ENCODE measurements at regions of chr2 and their contacts with region 1.

Region 1: GRCh38 chr2:207473049-207473930 is 56.5 kb upstream of the CREB1 start:
- DNase-seq: peak in 1 of 2 donors; percentile 45
- H3K4me3 ChIP-seq: peak overlapping the region; percentile 1 to 27
- H3K27ac ChIP-seq: peak overlapping the region in 1 of 2 donors; percentile 1
- H3K4me1 ChIP-seq: peaks cover 0 to 11% (median 1%) of the 10 kb centered on the region in 4 donors
- H3K27me3 ChIP-seq: no peaks in the 10 kb centered on the region
- CTCF ChIP-seq: peak; percentile 56 to 62

Region 2: GRCh38 chr2:206693399-206694137 is 779.7 kb before region 1 on chr2:
- intact Hi-C with region 1: loop called (anchors 10 kb)
- DNase-seq: no peak
- H3K4me3 ChIP-seq: no peak overlapping the region
- H3K27ac ChIP-seq: no peak overlapping the region
- H3K4me1 ChIP-seq: no peaks in the 10 kb centered on the region
- H3K27me3 ChIP-seq: no peaks in the 10 kb centered on the region
- CTCF ChIP-seq: peak; percentile 56 to 70

Region 3: GRCh38 chr2:206765242-206766056 is 707.8 kb before region 1 on chr2 and contains the starts of genes FASTKD2 and MDH1B:
- intact Hi-C with region 1: no loop called
- DNase-seq: peak; percentile 93 to 94
- H3K4me3 ChIP-seq: peak within 1 kb of the TSS; percentile 70 to 89
- H3K27ac ChIP-seq: peak within 1 kb of the TSS; percentile 86 to 89
- H3K4me1 ChIP-seq: peaks cover 0 to 42% (median 15%) of the 10 kb centered on the region in 4 donors
- H3K27me3 ChIP-seq: no peaks in the 10 kb centered on the region
- CTCF ChIP-seq: no peak

Region 4: DNA sequence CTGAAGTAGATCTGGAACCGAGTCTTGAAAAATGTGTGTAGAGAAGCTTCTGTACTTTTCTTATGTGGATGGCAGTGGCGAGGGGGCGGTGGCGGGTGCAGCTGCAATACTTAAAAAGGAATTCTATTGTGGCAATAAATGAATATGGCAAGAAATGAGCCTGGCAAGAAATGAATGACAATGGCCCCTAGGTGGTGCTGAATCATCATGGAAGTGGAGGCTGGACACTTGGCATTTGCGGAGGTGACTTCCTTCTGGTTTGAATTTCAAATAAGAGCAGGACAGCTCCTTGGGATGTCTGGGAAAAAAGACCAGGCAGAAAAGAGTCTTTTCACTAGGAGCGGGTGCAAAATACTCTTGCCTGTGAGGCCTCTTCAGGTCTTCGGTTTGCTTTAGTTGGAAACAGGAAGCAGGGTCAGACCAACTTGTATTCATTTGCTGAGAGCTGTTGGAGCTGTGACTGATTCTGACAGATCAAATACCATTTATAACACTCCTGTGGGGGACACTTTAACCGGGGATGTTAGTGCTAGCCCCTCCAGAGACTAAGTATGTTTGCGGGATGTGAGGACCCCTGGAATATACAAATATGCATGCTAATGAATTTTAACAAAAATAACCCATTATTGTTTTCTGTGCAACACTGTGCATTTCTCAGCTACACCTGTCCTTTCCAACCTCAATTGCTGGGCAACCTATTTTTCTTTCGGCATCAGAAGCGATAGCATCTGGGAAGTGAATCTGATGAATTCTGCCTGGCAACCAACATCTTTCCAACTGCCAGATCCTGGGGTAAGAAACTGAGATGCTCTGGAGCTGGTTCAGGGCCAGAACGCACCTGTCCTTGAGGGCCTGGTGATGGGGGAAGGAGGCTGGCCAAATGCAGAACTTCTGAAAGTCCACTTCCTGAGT is 672.5 kb before region 1 on chr2:
- intact Hi-C with region 1: loop called (anchors 5 kb)
- DNase-seq: peak; percentile 58 to 70
- H3K4me3 ChIP-seq: no peak overlapping the region
- H3K27ac ChIP-seq: no peak overlapping the region
- H3K4me1 ChIP-seq: peaks cover 0 to 9% (median 5%) of the 10 kb centered on the region in 4 donors
- H3K27me3 ChIP-seq: no peaks in the 10 kb centered on the region
- CTCF ChIP-seq: peak; percentile 64 to 69

Region 5: DNA sequence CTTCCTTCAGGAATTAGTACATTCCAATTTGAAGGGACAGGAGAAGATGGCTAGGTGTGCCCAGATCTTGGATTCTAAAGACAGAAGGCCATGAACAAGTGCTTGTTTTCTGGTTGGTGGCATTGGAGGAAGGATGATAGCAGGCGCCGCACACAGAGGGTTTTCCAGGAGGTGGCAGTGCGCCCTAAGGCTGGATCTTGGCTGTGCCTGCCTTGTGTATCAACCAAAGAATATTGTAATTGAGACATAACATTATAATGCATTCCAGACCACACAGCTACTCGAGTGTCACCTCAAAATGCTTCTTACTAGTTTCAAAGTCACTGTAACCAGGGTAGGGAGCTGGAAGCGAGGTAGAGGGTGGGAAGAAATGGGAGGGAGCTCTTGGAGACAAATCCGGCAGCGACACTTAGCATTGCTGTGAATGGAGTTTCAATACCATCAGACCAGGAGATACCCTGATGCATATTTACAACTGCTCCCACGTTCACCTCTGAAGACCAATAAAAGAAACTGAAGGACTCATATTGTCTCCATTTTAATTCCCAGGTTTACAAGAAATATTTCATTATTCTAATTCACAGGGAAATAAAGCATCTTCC is 491.4 kb before region 1 on chr2:
- intact Hi-C with region 1: loop called (anchors 1 kb)
- DNase-seq: peak; percentile 73 to 84
- H3K4me3 ChIP-seq: peak overlapping the region in 1 of 2 donors; percentile 11
- H3K27ac ChIP-seq: no peak overlapping the region
- H3K4me1 ChIP-seq: peaks cover 0 to 10% (median 3%) of the 10 kb centered on the region in 4 donors
- H3K27me3 ChIP-seq: no peaks in the 10 kb centered on the region
- CTCF ChIP-seq: peak; percentile 89 to 97

Region 6: DNA sequence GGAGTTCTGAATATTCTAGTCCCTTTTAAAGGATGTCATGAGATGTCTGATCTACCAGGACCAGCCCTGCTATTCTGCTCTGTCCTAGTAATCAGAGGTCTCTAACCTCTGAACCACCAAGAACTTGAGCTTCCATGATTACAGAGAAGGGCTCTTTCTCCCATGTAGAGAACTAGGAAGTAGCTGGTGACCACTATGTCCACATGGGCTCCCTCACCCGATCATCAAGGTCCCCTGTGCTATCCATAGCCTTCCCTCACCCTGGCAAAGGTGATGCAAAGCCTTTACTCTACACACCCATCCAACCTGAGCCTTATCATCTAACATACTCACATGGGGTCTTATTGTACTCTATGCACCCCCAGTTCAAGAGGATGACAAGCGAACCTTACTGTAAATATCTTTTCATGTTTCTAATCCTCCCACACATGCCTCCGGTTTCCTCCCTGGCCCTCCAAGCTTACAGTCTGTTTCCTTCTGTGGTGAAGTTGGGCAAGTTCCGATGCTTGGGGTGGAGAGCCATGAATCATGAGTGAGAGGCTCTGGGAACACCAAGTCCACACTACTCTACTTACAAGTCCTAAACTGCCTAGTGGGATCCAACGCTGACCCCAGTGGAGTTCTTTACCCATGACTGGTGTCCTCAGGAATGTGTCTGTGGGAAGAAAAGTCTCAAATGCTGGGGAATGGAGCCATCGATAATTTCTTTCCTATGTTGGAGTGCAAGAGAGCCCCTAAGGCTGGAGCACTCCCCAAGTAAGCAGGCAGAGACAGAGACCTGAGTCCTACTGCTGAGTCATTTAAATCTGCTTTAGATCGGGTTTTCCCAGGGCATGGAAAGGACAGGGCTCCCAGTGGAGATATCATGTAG is 234.2 kb before region 1 on chr2:
- intact Hi-C with region 1: no loop called
- DNase-seq: peak; percentile 92
- H3K4me3 ChIP-seq: no peak overlapping the region
- H3K27ac ChIP-seq: peak overlapping the region; percentile 63 to 77
- H3K4me1 ChIP-seq: peaks cover 0 to 52% (median 24%) of the 10 kb centered on the region in 4 donors
- H3K27me3 ChIP-seq: no peaks in the 10 kb centered on the region
- CTCF ChIP-seq: no peak

Region 7: GRCh38 chr2:207768866-207769596 is 295.7 kb after region 1 on chr2:
- intact Hi-C with region 1: no loop called
- DNase-seq: peak in 1 of 2 donors; percentile 27
- H3K4me3 ChIP-seq: peak overlapping the region; percentile 80 to 96
- H3K27ac ChIP-seq: peak overlapping the region; percentile 79 to 82
- H3K4me1 ChIP-seq: peaks cover 0 to 25% (median 14%) of the 10 kb centered on the region in 4 donors
- H3K27me3 ChIP-seq: no peaks in the 10 kb centered on the region
- CTCF ChIP-seq: no peak

Measured in tibial artery (tissue), 4 donors.